ENCODE measurements at regions of chr13 and their contacts with region 1.

Region 1: DNA sequence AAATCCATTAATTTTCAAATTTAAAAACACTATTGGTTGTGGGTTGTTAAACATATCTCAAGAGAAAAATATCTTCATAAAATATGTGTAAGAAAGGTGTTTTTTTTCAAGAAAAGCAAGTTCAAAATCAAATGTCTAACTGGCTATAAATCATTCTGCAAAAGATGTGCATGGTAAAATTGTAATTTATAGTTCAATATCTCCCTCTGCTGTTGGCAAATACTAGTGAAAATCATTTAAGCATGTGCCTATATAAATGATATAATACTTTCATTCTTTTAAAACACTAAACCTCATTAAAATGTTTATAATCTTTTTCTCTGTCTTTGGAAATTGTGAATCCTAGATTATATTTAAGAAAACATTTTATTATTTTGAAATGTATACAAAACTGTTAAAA is 17.2 kb upstream of the SLITRK6 start:
- DNase-seq: no peak
- H3K4me3 ChIP-seq: no peak overlapping the region
- H3K27ac ChIP-seq: no peak overlapping the region
- H3K4me1 ChIP-seq: no peaks in the 10 kb centered on the region
- H3K27me3 ChIP-seq: no peaks in the 10 kb centered on the region
- CTCF ChIP-seq: peak; percentile 20 to 24

Region 2: DNA sequence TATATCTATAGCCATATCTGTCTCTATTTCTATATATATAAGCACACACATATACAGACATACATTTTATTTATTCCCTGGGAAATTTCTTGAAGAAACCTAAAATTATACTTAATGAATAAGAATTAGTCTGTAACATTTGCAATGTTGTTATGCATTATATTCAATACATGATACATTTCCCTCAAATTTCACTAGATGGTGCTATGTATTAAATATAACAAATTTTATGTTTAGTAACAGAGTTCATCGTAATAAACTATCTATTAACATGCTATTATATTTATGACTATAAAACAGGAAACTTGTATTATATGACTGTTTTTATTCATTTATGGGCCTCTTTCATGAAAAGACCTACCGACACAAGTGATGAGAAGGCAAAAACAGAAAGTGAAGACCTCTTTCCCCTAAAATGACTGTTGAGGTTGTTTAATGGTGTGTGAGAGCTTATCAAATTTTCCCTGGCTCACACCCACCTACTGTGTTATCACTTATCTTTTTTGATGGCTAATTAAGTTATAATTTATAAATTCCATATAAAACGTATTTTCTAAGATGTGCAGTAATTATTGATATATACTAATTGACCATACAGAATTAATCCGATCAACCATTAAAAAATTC is 899.0 kb before region 1 on chr13:
- CTCF ChIA-PET with region 1: interaction called, 13 read pairs
- dilution Hi-C with region 1: no loop called
- in situ Hi-C with region 1: loop called in 1 of 2 experiments (anchors 10 kb)
- intact Hi-C with region 1: no loop called
- DNase-seq: peak; percentile 4
- H3K4me3 ChIP-seq: no peak overlapping the region
- H3K27ac ChIP-seq: no peak overlapping the region
- H3K4me1 ChIP-seq: no peaks in the 10 kb centered on the region
- H3K27me3 ChIP-seq: no peaks in the 10 kb centered on the region
- CTCF ChIP-seq: peak; percentile 30 to 39

Region 3: GRCh38 chr13:84925443-84925842 is 891.0 kb before region 1 on chr13:
- CTCF ChIA-PET with region 1: no interaction called
- dilution Hi-C with region 1: no loop called
- in situ Hi-C with region 1: loop called in 1 of 2 experiments (anchors 10 kb)
- intact Hi-C with region 1: no loop called
- DNase-seq: peak; percentile 52
- H3K4me3 ChIP-seq: no peak overlapping the region
- H3K27ac ChIP-seq: no peak overlapping the region
- H3K4me1 ChIP-seq: no peaks in the 10 kb centered on the region
- H3K27me3 ChIP-seq: no peaks in the 10 kb centered on the region
- CTCF ChIP-seq: no peak

Region 4: DNA sequence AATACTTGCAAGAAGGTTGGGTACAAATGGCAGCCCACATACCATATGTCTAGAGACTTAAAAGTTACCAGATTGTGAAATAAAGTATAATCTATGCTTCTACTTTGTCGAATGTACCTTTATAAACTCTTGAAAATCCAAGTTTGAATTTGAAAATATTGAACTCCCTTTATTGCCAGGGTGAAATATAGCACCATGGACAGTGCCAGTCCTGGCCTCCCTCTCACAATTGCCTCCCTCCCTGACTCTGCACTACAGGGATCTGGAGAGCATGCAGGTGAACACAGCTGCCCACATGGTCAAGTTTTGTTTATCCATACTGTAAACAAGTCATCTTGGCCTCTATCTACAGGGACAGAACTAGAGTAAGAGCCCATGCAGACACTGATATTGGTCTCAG is 376.9 kb after region 1 on chr13:
- CTCF ChIA-PET with region 1: no interaction called
- dilution Hi-C with region 1: no loop called
- in situ Hi-C with region 1: no loop called
- intact Hi-C with region 1: no loop called
- DNase-seq: no peak
- H3K4me3 ChIP-seq: no peak overlapping the region
- H3K27ac ChIP-seq: no peak overlapping the region
- H3K4me1 ChIP-seq: no peaks in the 10 kb centered on the region
- H3K27me3 ChIP-seq: no peaks in the 10 kb centered on the region
- CTCF ChIP-seq: no peak